ENCODE measurements at regions of chr9 and their contacts with region 1.

Region 1: GRCh38 chr9:107566611-107567061 is 77.1 kb upstream of the KLF4 start:
- DNase-seq: no peak
- H3K4me3 ChIP-seq: no peak overlapping the region
- CTCF ChIP-seq: no peak
- POLR2A ChIP-seq: no peak

Region 2: DNA sequence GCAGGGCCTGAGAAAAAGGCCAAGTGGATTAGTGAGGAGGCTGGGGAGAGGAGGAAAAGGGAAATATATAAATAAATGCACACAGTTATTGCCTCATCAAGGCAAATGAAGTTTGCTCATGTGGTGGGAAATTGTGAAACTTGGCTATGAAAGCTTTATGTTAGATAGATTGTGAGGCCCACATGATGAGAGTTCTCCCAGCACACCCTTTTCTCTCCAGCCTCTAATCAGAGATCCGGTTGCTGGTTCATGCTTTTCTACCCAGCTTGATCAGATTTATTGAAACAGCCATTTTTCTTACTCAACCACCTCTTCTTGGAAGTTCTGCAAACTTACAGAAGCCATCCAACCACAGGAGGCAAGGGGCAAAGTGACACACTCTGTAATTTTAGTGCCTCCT is 48.7 kb after region 1 on chr9:
- intact Hi-C with region 1: no loop called
- DNase-seq: no peak
- H3K4me3 ChIP-seq: no peak overlapping the region
- CTCF ChIP-seq: no peak
- POLR2A ChIP-seq: no peak

Region 3: GRCh38 chr9:107637421-107638420 is 71.1 kb after region 1 on chr9:
- intact Hi-C with region 1: loop called (anchors 10 kb)
- DNase-seq: peak; percentile 95 to 98
- H3K4me3 ChIP-seq: no peak overlapping the region
- CTCF ChIP-seq: no peak
- POLR2A ChIP-seq: peak in 1 of 2 donors; percentile 95